Ascending aorta (tissue), 2 donors: ENCODE measurements at regions of chr6 and their contacts with region 1.

Region 1: DNA sequence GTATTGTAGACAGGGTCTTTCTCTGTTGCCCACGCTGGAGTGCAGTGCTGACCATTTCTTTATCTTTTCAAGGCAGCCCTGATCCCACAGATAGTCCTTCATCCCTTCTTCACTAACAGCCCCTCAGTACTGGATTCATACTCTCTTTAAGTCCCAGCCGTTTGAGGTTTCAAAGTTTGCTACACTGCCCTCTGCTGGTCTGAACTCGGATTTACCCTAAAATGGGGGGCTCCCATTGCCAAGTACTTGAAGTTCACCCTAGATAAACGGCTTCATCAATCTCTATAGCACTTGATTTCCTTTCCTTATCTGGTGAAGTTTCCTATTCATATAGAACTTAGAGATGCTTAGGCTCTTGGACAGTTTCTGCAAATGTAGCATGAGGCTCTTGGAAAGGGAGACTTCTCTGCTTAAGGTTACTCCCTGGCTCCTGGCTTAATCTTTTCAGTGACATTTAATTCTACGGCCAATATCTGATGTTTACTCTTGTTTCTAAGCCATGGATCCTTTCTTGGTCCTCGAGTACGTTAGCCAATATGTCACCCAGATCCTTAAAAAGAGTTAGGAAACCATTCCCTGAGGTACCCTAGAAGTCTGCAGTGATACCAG is 21.4 kb upstream of the PREP start:
- DNase-seq: peak in 1 of 2 donors; percentile 67
- H3K4me3 ChIP-seq: no peak overlapping the region
- H3K27ac ChIP-seq: no peak overlapping the region
- H3K4me1 ChIP-seq: no peaks in the 10 kb centered on the region
- H3K27me3 ChIP-seq: no peaks in the 10 kb centered on the region
- CTCF ChIP-seq: peak; percentile 28 to 58 (median 51)

Region 2: DNA sequence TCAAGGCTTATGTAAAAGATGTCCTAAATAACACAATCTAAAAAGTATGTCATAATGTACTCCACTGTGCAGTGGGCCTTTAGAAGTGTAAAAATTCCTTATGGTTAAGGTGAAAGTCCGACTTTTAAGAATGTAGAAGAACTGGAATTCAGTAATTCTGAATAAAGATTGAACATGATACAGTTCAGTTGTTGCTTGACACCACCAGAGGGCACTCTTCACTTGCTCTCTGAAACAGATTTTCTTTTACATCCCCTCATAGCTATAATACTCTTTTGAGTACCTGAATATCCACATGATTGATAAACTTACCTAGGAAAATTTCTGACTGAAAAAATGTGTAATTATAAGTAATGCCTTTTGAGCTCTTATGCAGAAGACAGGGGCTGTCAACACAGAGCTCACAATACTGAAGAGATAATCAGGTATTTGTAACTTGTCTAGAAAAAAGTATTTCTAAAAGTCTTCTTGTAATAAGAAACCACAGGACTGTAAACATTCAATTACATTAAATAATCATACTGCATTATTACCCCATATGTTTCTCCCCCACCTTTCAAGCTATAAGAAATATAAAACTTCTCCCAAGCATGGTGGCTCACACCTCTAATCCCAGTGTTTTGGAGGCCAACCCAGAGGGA is 336.6 kb before region 1 on chr6:
- intact Hi-C with region 1: loop called (anchors 2 kb)
- DNase-seq: no peak
- H3K4me3 ChIP-seq: no peak overlapping the region
- H3K27ac ChIP-seq: no peak overlapping the region
- H3K4me1 ChIP-seq: peaks cover 0 to 5% of the 10 kb centered on the region in 2 donors
- H3K27me3 ChIP-seq: no peaks in the 10 kb centered on the region
- CTCF ChIP-seq: peak; percentile 47 to 83 (median 68)

Region 3: DNA sequence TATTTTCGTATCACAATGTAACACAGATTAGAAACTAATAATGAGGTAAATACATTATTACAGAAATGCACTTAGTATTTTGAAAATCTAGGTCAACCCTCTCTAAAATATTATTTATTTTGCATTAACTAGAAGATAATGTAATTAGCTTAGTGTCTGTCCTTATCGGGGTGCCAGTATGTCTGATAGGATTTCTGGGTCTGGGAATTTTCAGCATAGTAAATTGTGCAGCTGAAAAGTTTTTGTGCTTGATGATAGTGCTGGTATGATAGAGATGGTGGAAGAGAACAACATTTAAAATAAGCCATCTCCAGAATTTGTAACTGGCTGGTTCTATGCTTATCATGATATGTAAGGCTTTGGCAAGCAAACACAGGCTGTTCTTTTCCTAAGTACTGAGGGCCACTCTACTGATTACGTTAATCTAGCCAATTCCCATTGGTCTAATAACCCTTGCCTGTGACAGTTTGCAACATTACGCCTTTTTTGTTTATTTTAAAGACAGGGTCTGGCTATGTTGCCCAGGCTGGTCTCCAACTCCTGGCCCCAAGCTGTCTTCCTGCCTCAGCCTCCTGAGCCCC is 72.2 kb before region 1 on chr6:
- intact Hi-C with region 1: no loop called
- DNase-seq: no peak
- H3K4me3 ChIP-seq: no peak overlapping the region
- H3K27ac ChIP-seq: no peak overlapping the region
- H3K4me1 ChIP-seq: no peaks in the 10 kb centered on the region
- H3K27me3 ChIP-seq: no peaks in the 10 kb centered on the region
- CTCF ChIP-seq: no peak

Region 4: DNA sequence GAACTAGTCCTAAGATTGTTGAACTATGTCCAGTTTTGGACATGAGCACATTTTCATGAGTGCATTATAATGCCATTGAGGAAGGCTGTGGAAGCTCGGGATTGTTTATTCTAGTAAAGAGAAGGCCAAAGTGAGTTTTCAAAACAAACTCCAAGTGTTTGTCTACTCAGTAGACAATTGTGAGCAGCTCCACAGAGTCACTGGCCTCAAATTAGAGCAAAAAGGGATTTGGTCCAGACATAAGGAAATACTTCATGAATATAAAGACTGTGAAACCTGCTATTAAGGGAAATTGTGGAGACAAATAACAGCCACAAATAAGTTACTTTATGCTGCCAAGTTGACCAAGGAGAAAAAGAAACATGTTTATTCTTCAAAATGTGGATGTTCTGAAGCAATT is 21.2 kb after region 1 on chr6:
- intact Hi-C with region 1: no loop called
- DNase-seq: no peak
- H3K4me3 ChIP-seq: no peak overlapping the region
- H3K27ac ChIP-seq: no peak overlapping the region
- H3K4me1 ChIP-seq: no peaks in the 10 kb centered on the region
- H3K27me3 ChIP-seq: no peaks in the 10 kb centered on the region
- CTCF ChIP-seq: no peak